Activated naive CD4-positive, alpha-beta T cell treated with anti-CD3 and anti-CD28 coated beads for 36 hours (primary cell): ENCODE measurements at regions of chr6 and their contacts with region 1.

Region 1: DNA sequence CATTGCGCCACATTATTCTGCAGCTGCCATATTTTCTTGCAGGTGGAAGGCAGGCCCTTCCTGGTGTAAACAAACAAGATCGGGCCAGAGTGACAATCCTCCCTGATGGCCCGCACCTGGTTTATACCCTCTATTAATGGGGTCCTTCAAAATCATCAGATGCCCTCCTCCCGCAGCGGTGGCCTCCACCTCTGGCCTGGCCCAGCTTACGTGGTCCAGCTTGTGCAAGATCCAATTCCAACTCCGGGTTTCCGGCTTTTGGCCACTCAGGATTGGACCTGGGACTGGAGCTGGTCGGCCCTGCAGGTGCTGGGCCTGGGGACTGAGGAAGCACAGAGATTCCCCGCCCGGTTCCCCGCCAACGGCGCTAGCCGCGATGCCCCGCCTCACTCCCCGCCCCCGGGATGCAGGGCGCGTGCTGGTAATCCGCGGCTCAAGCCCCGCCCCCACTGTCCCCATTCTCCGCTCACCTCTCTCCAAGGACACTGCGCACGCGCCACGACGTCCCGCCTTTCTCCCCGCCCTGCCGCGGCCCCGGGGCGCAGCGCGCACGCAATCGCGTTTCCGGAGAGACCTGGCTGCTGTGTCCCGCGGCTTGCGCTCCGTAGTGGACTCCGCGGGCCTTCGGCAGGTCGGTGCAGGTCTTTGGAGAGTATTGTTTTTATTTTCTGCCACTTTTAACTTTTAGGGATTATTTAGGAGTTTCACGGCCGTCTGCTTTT is at the start of gene TMEM14B:
- DNase-seq: peak; percentile 100
- H3K4me3 Mint-ChIP-seq: peak within 1 kb of the TSS; percentile 91
- H3K27ac Mint-ChIP-seq: peak within 1 kb of the TSS; percentile 92
- H3K4me1 Mint-ChIP-seq: peaks cover 48% of the 10 kb centered on the region
- H3K27me3 Mint-ChIP-seq: no peaks in the 10 kb centered on the region
- total RNA-seq, gene TMEM14B: 78.7 to 79.5 TPM

Region 2: DNA sequence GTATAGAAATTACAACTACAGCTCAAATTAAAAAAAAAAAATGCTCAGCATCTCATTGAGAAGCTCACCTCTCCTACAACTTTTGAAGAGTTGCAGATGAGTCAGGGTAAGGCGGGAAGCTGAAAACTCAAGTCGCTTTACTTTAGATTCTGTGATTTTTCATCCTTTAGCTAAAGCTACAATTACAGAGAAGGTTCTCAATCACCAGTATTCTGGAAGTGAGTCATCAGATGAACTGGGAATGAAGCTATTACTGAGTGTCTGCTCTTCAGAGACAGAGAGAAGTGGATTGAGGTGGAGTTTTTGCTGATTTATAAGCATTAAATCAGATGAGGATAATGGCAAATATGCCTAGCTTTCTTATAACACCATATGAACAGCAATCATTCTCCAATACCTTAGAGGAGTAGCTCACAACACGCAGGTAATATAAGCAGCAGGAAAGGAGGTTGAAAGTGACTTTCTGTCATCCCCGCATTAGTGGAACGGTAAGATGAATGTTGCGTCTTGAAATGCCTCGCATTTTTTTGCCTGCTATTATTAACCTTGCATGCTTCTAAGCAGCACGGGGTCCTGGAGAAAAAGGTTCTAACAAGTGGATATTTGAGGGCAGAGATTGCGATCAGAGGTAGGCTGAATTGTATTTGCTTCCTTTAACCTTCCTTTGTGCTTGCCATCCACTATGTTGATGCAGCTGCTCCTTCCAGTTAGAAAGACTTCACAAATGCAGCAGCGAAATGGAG is 424.2 kb before region 1 on chr6:
- CTCF ChIA-PET with region 1: no interaction called
- intact Hi-C with region 1: no loop called
- DNase-seq: no peak
- H3K4me3 Mint-ChIP-seq: no peak overlapping the region
- H3K27ac Mint-ChIP-seq: no peak overlapping the region
- H3K4me1 Mint-ChIP-seq: no peaks in the 10 kb centered on the region
- H3K27me3 Mint-ChIP-seq: peaks cover 3% of the 10 kb centered on the region

Region 3: GRCh38 chr6:10510592-10511367 is 236.6 kb before region 1 on chr6:
- CTCF ChIA-PET with region 1: interaction called, 4 read pairs
- intact Hi-C with region 1: loop called (anchors 2 kb)
- DNase-seq: peak; percentile 70
- H3K4me3 Mint-ChIP-seq: no peak overlapping the region
- H3K27ac Mint-ChIP-seq: no peak overlapping the region
- H3K4me1 Mint-ChIP-seq: no peaks in the 10 kb centered on the region
- H3K27me3 Mint-ChIP-seq: peaks cover 5% of the 10 kb centered on the region

Region 4: DNA sequence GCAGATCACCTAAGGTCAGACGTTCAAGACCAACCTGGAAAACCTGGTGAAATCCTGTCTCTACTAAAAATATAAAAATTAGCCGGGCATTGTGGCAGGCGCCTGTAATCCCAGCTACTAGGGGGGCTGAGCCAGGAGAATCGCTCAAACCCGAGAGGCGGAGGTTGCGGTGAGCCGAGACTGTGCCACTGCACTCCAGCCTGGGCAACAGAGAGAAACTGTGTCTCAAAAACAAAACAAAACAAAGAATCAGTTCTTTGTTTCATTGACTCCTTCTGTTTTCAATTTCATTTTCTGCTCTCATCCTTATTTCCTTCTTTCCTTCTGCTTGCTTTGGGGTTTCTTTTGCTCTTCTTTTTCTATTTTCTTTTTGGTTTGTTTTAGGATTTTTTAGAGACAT is 33.5 kb before region 1 on chr6:
- CTCF ChIA-PET with region 1: no interaction called
- intact Hi-C with region 1: loop called (anchors 5 kb)
- DNase-seq: no peak
- H3K4me3 Mint-ChIP-seq: no peak overlapping the region
- H3K27ac Mint-ChIP-seq: no peak overlapping the region
- H3K4me1 Mint-ChIP-seq: peaks cover 3% of the 10 kb centered on the region
- H3K27me3 Mint-ChIP-seq: no peaks in the 10 kb centered on the region

Region 5: DNA sequence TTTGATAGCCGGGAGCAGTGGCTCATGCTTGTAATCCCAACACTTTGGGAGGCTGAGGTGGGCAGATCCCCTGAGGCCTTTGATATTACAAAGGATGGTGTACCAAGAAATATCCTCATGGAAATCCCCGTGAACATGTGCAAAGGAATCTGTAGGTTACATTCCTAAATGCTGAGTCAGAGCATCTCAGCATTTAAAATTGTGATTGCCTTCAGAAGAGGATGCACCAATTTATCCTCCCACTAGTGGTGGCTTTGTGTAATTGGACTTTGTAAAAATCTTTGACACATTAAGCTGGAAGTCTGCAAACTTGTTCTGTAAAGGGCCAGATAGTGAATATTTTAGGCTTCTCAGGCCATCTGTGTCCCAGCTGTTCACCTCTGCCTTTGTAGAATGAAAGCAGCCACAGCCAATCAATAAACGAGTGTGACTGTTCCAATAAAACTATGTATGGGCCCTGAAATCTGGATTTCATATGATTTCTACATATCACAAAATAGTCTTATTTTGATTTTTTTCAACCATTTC is 12.0 kb after region 1 on chr6:
- CTCF ChIA-PET with region 1: interaction called, 6 read pairs
- intact Hi-C with region 1: loop called (anchors 1 kb)
- DNase-seq: no peak
- H3K4me3 Mint-ChIP-seq: no peak overlapping the region
- H3K27ac Mint-ChIP-seq: no peak overlapping the region
- H3K4me1 Mint-ChIP-seq: peaks cover 29% of the 10 kb centered on the region
- H3K27me3 Mint-ChIP-seq: no peaks in the 10 kb centered on the region

Region 6: DNA sequence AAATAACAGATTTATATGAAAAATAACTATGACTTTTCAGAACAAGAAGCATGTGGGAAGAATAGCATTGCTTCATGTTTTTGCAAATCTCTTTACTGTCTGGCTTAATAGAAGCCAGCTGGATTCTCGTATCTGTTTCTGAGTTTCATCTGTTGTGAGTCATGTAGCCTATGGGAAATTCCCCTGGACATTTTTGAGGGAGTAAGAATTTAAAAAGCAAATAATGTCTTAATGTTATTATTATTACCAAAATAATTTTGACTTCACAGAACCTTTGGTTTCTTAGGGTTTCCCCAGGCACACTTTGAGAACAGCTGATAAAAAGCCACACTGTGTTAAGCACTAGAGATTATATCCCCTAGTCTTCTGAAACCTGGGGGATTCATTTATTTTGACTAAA is 215.3 kb after region 1 on chr6:
- CTCF ChIA-PET with region 1: no interaction called
- intact Hi-C with region 1: no loop called
- DNase-seq: no peak
- H3K4me3 Mint-ChIP-seq: no peak overlapping the region
- H3K27ac Mint-ChIP-seq: no peak overlapping the region
- H3K4me1 Mint-ChIP-seq: no peaks in the 10 kb centered on the region
- H3K27me3 Mint-ChIP-seq: peaks cover 11% of the 10 kb centered on the region

Region 7: GRCh38 chr6:10976571-10976970 is 229.2 kb after region 1 on chr6:
- CTCF ChIA-PET with region 1: no interaction called
- intact Hi-C with region 1: no loop called
- DNase-seq: no peak
- H3K4me3 Mint-ChIP-seq: no peak overlapping the region
- H3K27ac Mint-ChIP-seq: no peak overlapping the region
- H3K4me1 Mint-ChIP-seq: no peaks in the 10 kb centered on the region
- H3K27me3 Mint-ChIP-seq: peaks cover 5% of the 10 kb centered on the region

Region 8: DNA sequence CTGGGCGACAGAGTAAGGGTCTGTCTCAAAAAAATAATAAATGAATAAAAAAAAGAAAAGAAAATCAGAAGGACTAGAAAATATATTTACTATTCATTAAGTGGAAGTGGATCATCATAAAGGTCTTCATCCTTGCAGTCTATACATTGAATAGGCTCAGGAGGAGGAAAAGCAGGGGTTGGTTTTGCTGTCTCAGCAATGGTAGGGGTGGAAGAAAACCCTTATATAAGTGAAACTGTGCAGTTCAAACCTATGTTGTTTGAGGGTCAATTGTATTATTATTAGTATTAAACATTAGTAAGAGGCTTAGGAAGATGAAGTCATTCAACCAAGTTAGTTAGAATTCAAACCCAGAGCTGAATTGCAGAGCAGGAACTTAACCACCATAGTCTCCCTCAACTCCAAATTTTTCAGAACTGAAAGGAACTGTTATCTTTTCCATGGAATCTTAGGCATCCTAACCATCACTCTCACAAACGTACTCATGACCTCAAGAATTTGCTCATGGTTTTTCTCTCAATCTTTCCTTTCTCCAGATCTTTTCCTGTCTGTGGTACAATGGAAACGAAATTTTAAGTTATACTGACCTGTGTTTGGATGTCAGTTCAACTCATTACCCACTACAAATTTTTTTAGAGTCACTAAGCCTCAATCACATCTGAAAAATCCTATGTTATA is 338.5 kb after region 1 on chr6:
- CTCF ChIA-PET with region 1: no interaction called
- intact Hi-C with region 1: no loop called
- DNase-seq: no peak
- H3K4me3 Mint-ChIP-seq: no peak overlapping the region
- H3K27ac Mint-ChIP-seq: no peak overlapping the region
- H3K4me1 Mint-ChIP-seq: no peaks in the 10 kb centered on the region
- H3K27me3 Mint-ChIP-seq: no peaks in the 10 kb centered on the region

Region 9: GRCh38 chr6:11537229-11538051 is 790.0 kb after region 1 on chr6 and contains the start of gene TMEM170B:
- CTCF ChIA-PET with region 1: no interaction called
- intact Hi-C with region 1: loop called (anchors 1 kb)
- DNase-seq: peak; percentile 84
- H3K4me3 Mint-ChIP-seq: peak within 1 kb of the TSS; percentile 78
- H3K27ac Mint-ChIP-seq: no peak within 1 kb of the TSS
- H3K4me1 Mint-ChIP-seq: peaks cover 9% of the 10 kb centered on the region
- H3K27me3 Mint-ChIP-seq: peaks cover 6% of the 10 kb centered on the region
- total RNA-seq, gene TMEM170B: 0.40 to 0.57 TPM